ENCODE measurements at regions of chr2 and their contacts with region 1.

Region 1: GRCh38 chr2:217886720-217887309 is 116.0 kb downstream of the TNS1 start:
- DNase-seq: peak; percentile 68
- H3K4me3 ChIP-seq: no peak overlapping the region; a peak in 1 of 4 replicates
- H3K27ac ChIP-seq: peak overlapping the region; percentile 30 to 41; a peak in 3 of 4 replicates
- H3K4me1 ChIP-seq: peaks cover 0 to 28% of the 10 kb centered on the region in 2 experiments; a peak in 1 of 4 replicates
- H3K27me3 ChIP-seq: no peaks in the 10 kb centered on the region
- CTCF ChIP-seq: peak; percentile 80
- EP300 ChIP-seq: no peak
- RAD21 ChIP-seq: peak; percentile 74

Region 2: DNA sequence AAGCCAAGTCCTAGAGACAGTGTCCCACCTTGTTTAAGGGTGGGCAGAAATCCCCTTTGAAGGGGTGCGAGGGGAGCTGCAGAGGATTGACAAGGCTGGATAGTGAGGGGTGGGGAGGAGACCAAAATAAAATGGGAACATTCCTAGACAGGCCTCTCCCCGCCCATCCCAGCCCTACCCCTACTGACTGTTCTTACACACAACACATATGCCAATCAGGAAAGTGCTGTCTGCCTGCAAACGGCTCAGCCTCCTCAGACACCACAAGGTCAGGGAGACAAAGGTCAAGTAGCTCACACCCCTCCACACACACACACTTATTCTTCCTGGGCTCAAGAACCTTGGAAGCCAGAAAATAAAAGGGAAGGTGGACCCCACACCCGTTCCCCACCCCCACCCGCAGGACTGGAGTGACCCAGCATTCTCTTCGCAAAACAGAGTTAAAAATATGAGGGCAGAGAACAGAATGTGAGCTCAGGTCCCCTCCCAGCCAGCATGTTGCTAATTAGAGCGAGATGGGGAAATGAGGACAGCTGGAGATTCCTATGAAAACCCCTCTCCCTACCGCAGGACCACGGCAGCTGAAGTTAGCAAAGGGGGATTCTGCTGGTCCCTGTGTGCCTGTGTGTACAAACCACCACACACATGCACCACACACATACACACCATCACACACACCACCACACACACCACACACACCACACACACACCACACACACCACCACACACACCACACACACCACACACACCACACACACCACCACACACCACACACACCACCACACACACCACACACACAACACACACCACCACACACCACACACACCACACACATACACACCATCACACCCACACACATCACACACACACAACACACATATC is 81.8 kb before region 1 on chr2:
- CTCF ChIA-PET with region 1: interaction called, 82 read pairs
- POLR2A ChIA-PET with region 1: no interaction called
- DNase-seq: peak; percentile 47
- H3K4me3 ChIP-seq: no peak overlapping the region
- H3K27ac ChIP-seq: no peak overlapping the region
- H3K4me1 ChIP-seq: peaks cover 0 to 29% of the 10 kb centered on the region in 2 experiments; a peak in 2 of 4 replicates
- H3K27me3 ChIP-seq: no peaks in the 10 kb centered on the region
- CTCF ChIP-seq: no peak
- EP300 ChIP-seq: no peak
- RAD21 ChIP-seq: no peak

Region 3: DNA sequence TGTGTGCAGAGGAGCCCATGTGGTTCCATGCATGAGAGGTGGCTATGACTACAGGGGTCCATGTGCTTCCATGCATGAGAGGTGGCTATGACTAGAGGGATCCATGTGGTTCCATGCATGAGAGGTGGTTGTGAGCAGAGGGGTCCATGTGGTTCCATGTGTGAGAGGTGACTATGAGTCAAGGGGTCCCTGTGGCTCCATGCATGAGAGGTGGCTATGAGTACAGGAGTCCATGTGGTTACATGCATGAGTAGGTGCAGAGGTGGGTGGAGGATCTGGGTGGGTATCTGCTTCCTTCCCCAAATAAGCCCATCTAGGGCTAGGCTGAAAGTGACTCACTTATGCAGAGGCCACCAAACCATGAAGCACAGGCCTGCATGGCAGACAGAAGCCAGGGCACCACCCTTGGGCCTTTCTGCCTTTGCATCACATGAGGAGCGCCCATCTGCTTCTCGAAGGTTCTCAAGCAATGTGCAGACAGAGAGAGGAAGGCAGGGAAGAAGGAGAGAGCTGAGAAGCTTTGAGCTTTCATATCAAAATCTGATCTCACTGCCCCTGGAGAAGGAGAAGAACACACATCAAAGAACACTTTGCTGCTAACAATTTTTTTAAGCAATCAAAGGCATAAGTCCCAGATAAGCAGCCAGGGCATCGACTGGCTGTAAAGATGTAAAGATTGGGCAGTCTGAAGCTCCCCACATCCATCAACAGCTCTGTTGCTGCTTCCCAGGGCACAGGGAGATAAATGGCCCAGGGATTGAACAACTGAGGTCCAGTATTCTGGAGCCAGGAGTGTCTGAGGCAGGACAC is 21.6 kb before region 1 on chr2:
- CTCF ChIA-PET with region 1: interaction called, 20 read pairs
- POLR2A ChIA-PET with region 1: interaction called, 5 read pairs
- DNase-seq: no peak
- H3K4me3 ChIP-seq: no peak overlapping the region
- H3K27ac ChIP-seq: no peak overlapping the region; a peak in 1 of 4 replicates
- H3K4me1 ChIP-seq: peaks cover 8 to 9% of the 10 kb centered on the region in 2 experiments; a peak in 2 of 4 replicates
- H3K27me3 ChIP-seq: no peaks in the 10 kb centered on the region
- CTCF ChIP-seq: no peak
- EP300 ChIP-seq: no peak
- RAD21 ChIP-seq: no peak

Region 4: DNA sequence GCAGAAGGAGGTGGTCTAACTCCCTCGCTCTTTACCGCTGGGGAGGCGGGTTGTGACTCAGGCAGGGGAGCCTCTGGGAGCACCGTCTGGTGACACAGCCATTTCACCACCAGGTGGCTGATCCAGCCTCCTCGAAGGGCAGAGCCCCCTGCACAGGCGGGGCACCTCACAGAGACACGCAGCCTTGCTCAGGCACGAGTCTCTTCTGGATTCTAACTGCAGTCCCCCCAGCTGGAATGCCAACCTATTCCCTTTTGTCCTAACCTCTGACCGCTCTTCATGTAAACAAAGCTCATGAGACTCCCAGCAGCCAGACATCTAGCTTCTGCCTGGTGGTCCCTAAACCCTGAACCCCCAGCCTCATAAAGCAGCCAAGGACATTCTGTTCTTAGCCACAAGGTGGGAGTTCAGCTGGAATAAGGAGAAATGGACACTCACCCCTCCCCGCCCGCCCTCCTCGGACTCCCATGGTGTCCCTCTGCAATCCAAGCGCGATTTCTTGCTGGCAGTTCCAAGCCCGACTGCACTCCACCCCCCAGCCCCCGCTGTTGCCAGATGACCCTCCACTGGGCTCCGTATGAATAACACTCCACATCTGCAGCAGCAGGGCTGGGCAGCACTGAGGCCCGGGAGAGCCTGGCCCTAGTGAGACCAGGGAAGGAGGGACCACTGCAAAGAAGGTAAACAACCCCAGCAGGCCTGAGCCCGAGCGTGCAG is 31.7 kb after region 1 on chr2:
- CTCF ChIA-PET with region 1: interaction called, 10 read pairs
- POLR2A ChIA-PET with region 1: interaction called, 3 read pairs
- DNase-seq: peak; percentile 72
- H3K4me3 ChIP-seq: no peak overlapping the region
- H3K27ac ChIP-seq: no peak overlapping the region; a peak in 1 of 4 replicates
- H3K4me1 ChIP-seq: peaks cover 46 to 63% of the 10 kb centered on the region in 2 experiments
- H3K27me3 ChIP-seq: no peaks in the 10 kb centered on the region
- CTCF ChIP-seq: peak; percentile 31
- EP300 ChIP-seq: no peak
- RAD21 ChIP-seq: no peak; the same call in 1 of the 2 replicates

Region 5: DNA sequence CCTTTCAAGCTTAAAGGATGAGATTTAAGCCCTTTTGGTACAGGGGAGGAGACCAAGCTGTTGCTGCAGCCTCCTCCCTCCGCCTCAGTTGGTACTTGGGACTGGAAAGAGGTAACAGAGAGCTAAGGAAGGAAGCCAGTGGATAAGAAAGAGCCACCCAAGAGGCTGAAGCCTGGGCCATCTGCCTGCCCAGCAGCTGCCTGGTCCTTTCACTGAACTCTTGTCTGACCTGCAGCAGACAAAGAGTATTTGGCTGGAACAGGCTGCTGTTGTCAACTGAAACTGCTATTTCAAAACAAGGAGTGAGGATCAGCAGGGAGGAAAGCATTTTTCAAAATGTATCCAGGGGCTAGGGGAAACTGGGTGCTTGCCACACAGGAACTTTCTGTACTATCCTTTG is 85.7 kb after region 1 on chr2:
- CTCF ChIA-PET with region 1: interaction called, 11 read pairs
- POLR2A ChIA-PET with region 1: no interaction called
- DNase-seq: no peak
- H3K4me3 ChIP-seq: no peak overlapping the region
- H3K27ac ChIP-seq: no peak overlapping the region; a peak in 1 of 4 replicates
- H3K4me1 ChIP-seq: peaks cover 0 to 3% of the 10 kb centered on the region in 2 experiments; a peak in 1 of 4 replicates
- H3K27me3 ChIP-seq: no peaks in the 10 kb centered on the region
- CTCF ChIP-seq: no peak
- EP300 ChIP-seq: no peak
- RAD21 ChIP-seq: no peak

Region 6: DNA sequence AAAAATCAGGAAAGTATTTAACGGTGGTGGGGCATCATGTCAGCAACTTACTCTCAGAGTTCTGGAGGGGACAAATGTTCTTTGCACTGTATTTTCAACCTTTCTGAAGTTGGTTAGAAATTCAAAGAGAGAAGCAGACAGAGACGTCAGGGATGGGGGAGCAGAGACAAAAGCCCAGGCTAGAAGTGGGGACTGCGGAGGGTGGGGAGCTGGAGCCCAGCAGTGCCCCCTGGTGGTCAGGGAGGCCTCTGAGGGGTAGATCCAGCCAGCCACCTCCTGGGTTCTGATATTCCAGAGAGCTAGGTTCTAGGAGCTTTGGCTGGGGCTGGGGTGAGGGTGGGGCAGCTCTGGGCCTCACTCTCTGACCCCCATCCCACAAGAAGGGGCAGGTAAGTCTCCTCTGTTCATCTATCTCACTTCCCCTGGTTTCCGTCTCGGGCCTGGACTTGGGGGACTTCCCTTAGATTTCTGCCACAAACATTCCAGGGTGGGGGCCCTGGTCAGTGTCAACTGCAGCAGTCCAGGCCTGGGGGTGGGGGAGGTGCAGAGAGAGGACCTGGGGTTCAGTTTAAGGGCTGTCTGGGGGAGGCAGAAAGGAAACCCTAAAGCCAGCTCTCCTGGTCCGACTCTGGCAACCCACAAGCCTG is 107.1 kb after region 1 on chr2:
- CTCF ChIA-PET with region 1: interaction called, 61 read pairs
- POLR2A ChIA-PET with region 1: interaction called, 4 read pairs
- DNase-seq: peak; percentile 85
- H3K4me3 ChIP-seq: peak overlapping the region in 1 of 2 experiments; percentile 38; a peak in 1 of 4 replicates
- H3K27ac ChIP-seq: peak overlapping the region in 1 of 2 experiments; percentile 94; a peak in 2 of 4 replicates
- H3K4me1 ChIP-seq: peaks cover 25 to 42% of the 10 kb centered on the region in 2 experiments; a peak in 3 of 4 replicates
- H3K27me3 ChIP-seq: no peaks in the 10 kb centered on the region
- CTCF ChIP-seq: peak; percentile 85
- EP300 ChIP-seq: no peak
- RAD21 ChIP-seq: peak; percentile 57

Region 7: DNA sequence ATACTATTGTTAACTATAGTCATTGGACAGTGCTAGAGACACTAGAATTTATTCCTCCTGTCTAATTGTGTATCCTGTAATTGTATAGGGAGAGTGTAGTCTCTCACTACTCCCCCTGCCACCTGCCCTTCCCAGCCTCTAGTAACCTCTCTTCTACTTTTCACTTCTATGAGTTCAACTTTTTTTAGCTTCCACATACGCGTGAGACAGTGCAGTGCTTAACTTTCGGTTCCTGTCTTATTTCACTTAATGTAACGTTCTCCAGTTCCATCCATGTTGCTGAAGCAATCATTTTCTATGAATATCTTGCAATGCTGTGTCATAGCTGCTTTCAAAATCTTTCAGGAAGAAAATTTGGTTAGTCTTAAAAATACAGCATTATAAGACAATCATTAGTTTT is 159.4 kb after region 1 on chr2:
- CTCF ChIA-PET with region 1: no interaction called
- POLR2A ChIA-PET with region 1: no interaction called
- DNase-seq: no peak
- H3K4me3 ChIP-seq: no peak overlapping the region
- H3K27ac ChIP-seq: no peak overlapping the region
- H3K4me1 ChIP-seq: no peaks in the 10 kb centered on the region
- H3K27me3 ChIP-seq: no peaks in the 10 kb centered on the region
- CTCF ChIP-seq: no peak
- EP300 ChIP-seq: no peak
- RAD21 ChIP-seq: no peak